Right ventricle myocardium superior (tissue), 1 donor: ENCODE measurements at regions of chr10 and their contacts with region 1.

Region 1: DNA sequence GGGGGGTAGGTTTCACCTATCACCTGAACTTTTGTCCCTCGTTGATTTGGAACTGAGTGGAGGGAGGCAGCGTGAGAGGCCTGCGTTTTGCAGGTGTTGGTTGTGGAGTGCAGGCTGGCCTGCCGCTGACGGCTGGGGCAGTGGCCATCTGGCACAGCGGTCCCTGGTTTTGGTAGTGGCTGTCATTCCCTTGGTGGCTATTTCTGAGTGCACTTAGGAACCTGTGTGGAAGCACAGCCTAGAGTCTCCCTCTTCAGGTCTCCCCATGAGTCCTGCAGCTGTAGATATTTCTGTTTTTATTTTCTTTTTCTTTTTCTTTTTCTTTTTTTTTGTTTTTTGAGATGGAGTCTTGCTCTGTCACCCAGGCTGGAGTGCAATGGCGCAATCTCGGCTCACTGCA is 129.2 kb downstream of the CUL2 start:
- DNase-seq: peak; percentile 52
- ATAC-seq: peak; percentile 93

Region 2: GRCh38 chr10:34655286-34656170 is 305.5 kb before region 1 on chr10:
- intact Hi-C with region 1: loop called (anchors 10 kb)
- DNase-seq: no peak
- ATAC-seq: peak; percentile 35